ENCODE measurements at regions of chr3 and their contacts with region 1.

Region 1: DNA sequence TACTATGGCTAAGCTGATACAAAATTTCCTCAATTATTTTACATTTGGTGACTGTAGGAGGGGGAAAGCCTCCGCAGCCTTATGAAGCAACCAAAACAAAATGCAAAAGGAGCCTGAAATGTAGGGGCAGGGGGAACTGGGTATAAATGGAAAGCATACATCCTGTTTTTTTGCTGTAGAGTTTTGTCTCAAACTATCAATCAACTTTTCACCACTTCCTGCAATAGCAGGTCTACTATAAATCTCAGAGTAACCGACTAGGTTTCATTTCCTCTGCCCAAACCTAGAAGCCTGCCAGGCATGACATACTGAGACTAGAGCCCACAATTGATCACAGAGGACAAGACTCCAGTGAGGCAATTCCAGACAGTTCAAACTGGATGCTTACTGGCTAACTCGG is 91.3 kb downstream of the SHQ1 start:
- DNase-seq: peak; percentile 84
- ATAC-seq: peak; percentile 98
- H3K4me3 ChIP-seq: peak overlapping the region in 4 of 5 experiments; percentile 19 to 55 (median 32)
- H3K4me3 Mint-ChIP-seq: peak overlapping the region; percentile 61
- H3K27ac ChIP-seq: no peak overlapping the region
- H3K27ac Mint-ChIP-seq: peak overlapping the region; percentile 22
- H3K4me1 ChIP-seq: peaks cover 22 to 28% of the 10 kb centered on the region in 2 donors
- H3K4me1 Mint-ChIP-seq: peaks cover 28% of the 10 kb centered on the region
- H3K27me3 ChIP-seq: peaks cover 0 to 40% (median 21%) of the 10 kb centered on the region in 4 experiments
- H3K27me3 Mint-ChIP-seq: peaks cover 59% of the 10 kb centered on the region
- CTCF ChIP-seq: no peak

Region 2: DNA sequence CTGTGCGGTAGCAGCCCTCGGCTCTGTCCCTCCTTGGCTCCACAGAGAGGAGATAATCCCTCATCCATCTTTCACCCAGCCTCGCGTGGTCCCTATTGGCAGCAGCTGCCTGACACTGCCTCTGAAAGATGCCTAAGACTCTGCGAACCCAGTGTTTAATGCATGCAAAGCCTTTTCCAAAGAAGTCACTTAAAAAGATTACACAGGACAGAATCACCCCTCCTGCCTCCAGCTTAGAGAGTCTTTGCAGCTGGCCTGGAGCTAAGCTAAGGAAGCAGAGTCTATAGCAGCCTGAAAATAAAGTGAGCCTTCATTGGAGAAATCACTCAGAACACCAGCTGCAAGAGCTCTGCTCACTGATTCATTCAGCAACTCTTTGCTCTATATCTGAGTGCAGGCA is 155.8 kb before region 1 on chr3:
- CTCF ChIA-PET with region 1: no interaction called
- POLR2A ChIA-PET with region 1: no interaction called
- intact Hi-C with region 1: no loop called
- DNase-seq: no peak
- ATAC-seq: no peak
- H3K4me3 ChIP-seq: no peak overlapping the region
- H3K4me3 Mint-ChIP-seq: no peak overlapping the region
- H3K27ac ChIP-seq: no peak overlapping the region
- H3K27ac Mint-ChIP-seq: no peak overlapping the region
- H3K4me1 ChIP-seq: no peaks in the 10 kb centered on the region
- H3K4me1 Mint-ChIP-seq: no peaks in the 10 kb centered on the region
- H3K27me3 ChIP-seq: peaks cover 0 to 41% (median 10%) of the 10 kb centered on the region in 4 experiments
- H3K27me3 Mint-ChIP-seq: peaks cover 63% of the 10 kb centered on the region
- CTCF ChIP-seq: no peak

Region 3: GRCh38 chr3:72739531-72740424 is 17.1 kb before region 1 on chr3:
- CTCF ChIA-PET with region 1: no interaction called
- POLR2A ChIA-PET with region 1: interaction called, 4 read pairs
- intact Hi-C with region 1: loop called (anchors 2 kb)
- DNase-seq: no peak
- ATAC-seq: no peak
- H3K4me3 ChIP-seq: peak overlapping the region in 1 of 5 experiments; percentile 63
- H3K4me3 Mint-ChIP-seq: peak overlapping the region; percentile 88
- H3K27ac ChIP-seq: no peak overlapping the region
- H3K27ac Mint-ChIP-seq: no peak overlapping the region
- H3K4me1 ChIP-seq: peaks cover 15 to 23% of the 10 kb centered on the region in 2 donors
- H3K4me1 Mint-ChIP-seq: peaks cover 20% of the 10 kb centered on the region
- H3K27me3 ChIP-seq: peaks cover 0 to 65% (median 34%) of the 10 kb centered on the region in 4 experiments
- H3K27me3 Mint-ChIP-seq: peaks cover 52% of the 10 kb centered on the region
- CTCF ChIP-seq: no peak

Measured in B cell (primary cell).